ENCODE measurements at regions of chr9 and their contacts with region 1.

Region 1: DNA sequence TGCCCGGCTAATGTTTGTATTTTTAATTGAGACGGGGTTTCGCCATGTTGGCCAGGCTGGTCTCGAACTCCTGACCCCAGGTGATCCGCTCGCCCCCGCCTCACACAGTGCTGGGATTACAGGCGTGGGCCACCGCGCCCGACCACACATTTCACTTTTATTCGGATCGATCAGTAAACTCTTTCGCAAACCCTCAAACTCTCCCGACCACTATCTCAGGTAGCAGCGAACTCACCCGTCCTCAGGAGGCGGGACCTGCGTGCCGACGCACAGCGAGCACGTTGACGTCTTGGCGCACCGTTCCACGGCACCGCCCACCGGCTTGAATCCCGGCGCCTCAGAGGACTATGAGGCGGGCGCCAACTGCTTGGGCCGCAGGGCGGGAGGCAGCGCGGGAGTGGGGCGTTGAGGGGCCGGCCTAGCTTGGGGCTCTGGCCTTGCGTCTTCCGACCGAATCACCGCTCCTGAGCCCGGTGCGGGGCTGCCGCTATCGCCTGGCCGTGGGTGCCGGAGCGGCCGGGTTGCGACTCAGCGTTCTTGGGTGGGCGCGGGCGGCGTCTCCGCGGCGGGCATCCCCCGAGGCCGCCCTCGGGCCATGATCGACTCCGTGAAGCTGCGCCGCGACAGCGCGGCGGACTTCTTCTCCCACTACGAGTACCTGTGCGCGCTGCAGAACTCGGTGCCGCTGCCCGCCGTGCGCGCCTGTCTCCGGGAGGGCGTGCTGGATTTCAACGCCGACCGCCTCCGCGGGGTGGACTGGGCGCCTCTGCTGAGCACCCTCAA is at the start of gene CEP78:
- DNase-seq: peak; percentile 94
- H3K4me3 ChIP-seq: peak within 1 kb of the TSS; percentile 64 to 88 (median 67)
- H3K27ac ChIP-seq: peak within 1 kb of the TSS; percentile 74
- H3K4me1 ChIP-seq: peaks cover 5% of the 10 kb centered on the region
- H3K27me3 ChIP-seq: no peaks in the 10 kb centered on the region
- CTCF ChIP-seq: no peak
- total RNA-seq, gene CEP78: 16.7 to 24.7 TPM

Region 2: DNA sequence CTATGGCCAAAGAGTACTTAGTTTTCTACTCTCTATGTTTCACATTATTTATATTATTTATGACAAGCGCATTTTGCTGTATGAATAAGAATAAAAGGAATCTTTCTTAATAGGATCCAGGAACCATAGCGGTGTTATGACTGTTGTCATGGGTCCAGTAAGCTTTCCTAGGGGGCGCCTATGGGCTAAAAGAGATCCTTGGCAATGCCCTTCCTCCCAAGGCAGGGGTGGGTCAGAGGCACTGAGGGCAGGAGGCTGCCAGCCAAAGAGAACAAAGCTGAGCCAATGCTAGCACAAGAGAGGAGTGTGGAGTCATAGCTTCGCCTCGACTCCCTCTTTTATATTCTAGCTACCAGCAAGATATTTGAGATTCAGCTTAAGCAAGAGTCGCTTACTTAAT is 105.9 kb before region 1 on chr9:
- CTCF ChIA-PET with region 1: no interaction called
- dilution Hi-C with region 1: no loop called
- in situ Hi-C with region 1: no loop called
- intact Hi-C with region 1: loop called (anchors 5 kb)
- DNase-seq: peak; percentile 69
- H3K4me3 ChIP-seq: no peak overlapping the region
- H3K27ac ChIP-seq: no peak overlapping the region
- H3K4me1 ChIP-seq: peaks cover 4% of the 10 kb centered on the region
- H3K27me3 ChIP-seq: no peaks in the 10 kb centered on the region
- CTCF ChIP-seq: peak in 1 of 2 donors; percentile 22

Region 3: GRCh38 chr9:78144663-78145377 is 91.1 kb before region 1 on chr9:
- CTCF ChIA-PET with region 1: interaction called, 11 read pairs
- dilution Hi-C with region 1: no loop called
- in situ Hi-C with region 1: no loop called
- intact Hi-C with region 1: no loop called
- DNase-seq: no peak
- H3K4me3 ChIP-seq: no peak overlapping the region
- H3K27ac ChIP-seq: no peak overlapping the region
- H3K4me1 ChIP-seq: no peaks in the 10 kb centered on the region
- H3K27me3 ChIP-seq: no peaks in the 10 kb centered on the region
- CTCF ChIP-seq: no peak

Region 4: DNA sequence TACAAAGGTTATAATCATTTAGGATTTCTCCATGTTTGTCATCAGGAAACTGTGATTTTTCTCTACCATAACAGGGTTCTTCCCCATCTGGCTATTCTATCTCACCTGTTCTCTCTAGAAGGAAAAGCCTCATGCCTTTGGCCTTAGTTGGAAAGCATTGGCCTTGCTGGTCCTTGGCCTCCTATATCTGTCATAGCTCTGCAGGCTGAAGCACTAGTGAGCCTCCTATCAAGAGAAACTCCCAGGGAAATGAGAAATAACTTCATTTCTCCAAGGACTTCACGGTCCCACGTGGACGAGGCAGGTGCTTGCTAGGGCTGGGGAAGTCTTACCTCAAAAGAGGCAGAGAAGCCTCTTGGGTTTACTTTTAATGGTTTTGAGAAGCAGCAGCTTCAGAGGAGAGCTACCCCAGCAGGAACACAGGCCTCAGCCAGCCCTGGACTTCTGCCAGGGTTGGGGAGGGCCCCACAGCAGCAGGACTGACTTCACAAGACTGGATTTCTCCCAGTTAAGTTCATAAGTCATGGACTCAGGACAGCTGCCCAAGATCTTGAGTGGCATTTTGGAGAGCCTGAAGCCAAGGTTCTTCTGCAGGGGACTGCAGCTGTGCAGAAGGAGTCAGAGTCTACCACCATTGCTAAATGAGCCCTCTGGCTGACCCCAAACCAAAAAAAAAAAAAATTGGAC is 45.2 kb after region 1 on chr9:
- CTCF ChIA-PET with region 1: no interaction called
- dilution Hi-C with region 1: no loop called
- in situ Hi-C with region 1: no loop called
- intact Hi-C with region 1: no loop called
- DNase-seq: no peak
- H3K4me3 ChIP-seq: no peak overlapping the region
- H3K27ac ChIP-seq: no peak overlapping the region
- H3K4me1 ChIP-seq: peaks cover 9% of the 10 kb centered on the region
- H3K27me3 ChIP-seq: no peaks in the 10 kb centered on the region
- CTCF ChIP-seq: no peak

Region 5: DNA sequence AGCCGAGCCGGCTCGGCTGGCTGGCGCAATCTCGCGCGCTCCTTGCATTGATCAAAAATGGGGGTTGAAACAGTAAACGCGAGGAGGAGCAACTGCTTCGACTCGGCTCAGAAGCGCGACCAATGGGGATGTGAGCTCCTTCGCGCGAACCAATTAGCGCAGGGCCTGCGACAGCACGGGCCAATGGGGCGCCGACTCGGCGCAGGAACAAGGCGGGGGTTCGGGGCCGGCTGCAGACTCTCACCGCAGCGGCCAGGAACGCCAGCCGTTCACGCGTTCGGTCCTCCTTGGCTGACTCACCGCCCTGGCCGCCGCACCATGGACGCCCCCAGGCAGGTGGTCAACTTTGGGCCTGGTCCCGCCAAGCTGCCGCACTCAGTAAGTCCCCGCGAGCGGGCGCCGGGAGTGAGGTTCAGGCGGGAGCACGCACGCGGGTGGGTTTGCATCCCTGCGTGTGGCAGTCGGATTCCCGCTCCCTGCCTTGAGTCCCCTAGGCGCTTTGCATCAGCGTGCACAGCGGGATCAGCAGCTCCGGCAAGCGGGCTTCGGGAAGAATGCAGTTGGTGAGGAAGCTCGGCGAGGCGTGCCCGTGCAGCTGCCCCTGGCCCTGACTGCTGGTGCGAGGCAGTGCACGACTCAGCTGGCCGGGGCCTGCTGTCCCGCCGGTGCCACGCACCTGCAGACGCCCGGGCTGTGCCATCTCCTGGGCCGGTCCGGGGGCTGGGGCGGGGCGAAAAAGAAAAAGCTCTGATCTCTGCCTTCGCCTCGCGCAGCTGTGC is 61.1 kb after region 1 on chr9 and contains the start of gene PSAT1:
- CTCF ChIA-PET with region 1: no interaction called
- dilution Hi-C with region 1: no loop called
- in situ Hi-C with region 1: loop called in 1 of 2 experiments (anchors 5 kb)
- intact Hi-C with region 1: loop called (anchors 1 kb)
- DNase-seq: peak; percentile 96
- H3K4me3 ChIP-seq: peak within 1 kb of the TSS; percentile 91 to 96 (median 93)
- H3K27ac ChIP-seq: peak within 1 kb of the TSS; percentile 84
- H3K4me1 ChIP-seq: peaks cover 17% of the 10 kb centered on the region
- H3K27me3 ChIP-seq: no peaks in the 10 kb centered on the region
- CTCF ChIP-seq: peak in 1 of 2 donors; percentile 32
- total RNA-seq, gene PSAT1: 220 to 369 TPM

Region 6: GRCh38 chr9:78369639-78370219 is 133.8 kb after region 1 on chr9:
- CTCF ChIA-PET with region 1: no interaction called
- dilution Hi-C with region 1: no loop called
- in situ Hi-C with region 1: loop called in 1 of 2 experiments (anchors 5 kb)
- intact Hi-C with region 1: loop called (anchors 1 kb)
- DNase-seq: peak; percentile 42
- H3K4me3 ChIP-seq: no peak overlapping the region
- H3K27ac ChIP-seq: no peak overlapping the region
- H3K4me1 ChIP-seq: no peaks in the 10 kb centered on the region
- H3K27me3 ChIP-seq: no peaks in the 10 kb centered on the region
- CTCF ChIP-seq: peak; percentile 83 to 93

Region 7: GRCh38 chr9:78654324-78654723 is 418.4 kb after region 1 on chr9:
- CTCF ChIA-PET with region 1: no interaction called
- dilution Hi-C with region 1: no loop called
- in situ Hi-C with region 1: no loop called
- intact Hi-C with region 1: no loop called
- DNase-seq: peak; percentile 13
- H3K4me3 ChIP-seq: no peak overlapping the region
- H3K27ac ChIP-seq: no peak overlapping the region
- H3K4me1 ChIP-seq: no peaks in the 10 kb centered on the region
- H3K27me3 ChIP-seq: no peaks in the 10 kb centered on the region
- CTCF ChIP-seq: no peak

Measured in mammary epithelial cell (primary cell).